ENCODE measurements at regions of chr11 and their contacts with region 1.

Region 1: GRCh38 chr11:33899383-33900037 is 7.6 kb upstream of the LMO2 start:
- DNase-seq: peak; percentile 54 to 88
- ATAC-seq: peak; percentile 96 to 99 (median 96)
- H3K4me3 ChIP-seq: no peak overlapping the region
- H3K27ac ChIP-seq: peak overlapping the region in 5 of 10 donors; percentile 6 to 23 (median 17)
- H3K4me1 ChIP-seq: peaks cover 3 to 45% (median 15%) of the 10 kb centered on the region in 9 donors
- H3K27me3 ChIP-seq: no peaks in the 10 kb centered on the region
- CTCF ChIP-seq: no peak

Region 2: DNA sequence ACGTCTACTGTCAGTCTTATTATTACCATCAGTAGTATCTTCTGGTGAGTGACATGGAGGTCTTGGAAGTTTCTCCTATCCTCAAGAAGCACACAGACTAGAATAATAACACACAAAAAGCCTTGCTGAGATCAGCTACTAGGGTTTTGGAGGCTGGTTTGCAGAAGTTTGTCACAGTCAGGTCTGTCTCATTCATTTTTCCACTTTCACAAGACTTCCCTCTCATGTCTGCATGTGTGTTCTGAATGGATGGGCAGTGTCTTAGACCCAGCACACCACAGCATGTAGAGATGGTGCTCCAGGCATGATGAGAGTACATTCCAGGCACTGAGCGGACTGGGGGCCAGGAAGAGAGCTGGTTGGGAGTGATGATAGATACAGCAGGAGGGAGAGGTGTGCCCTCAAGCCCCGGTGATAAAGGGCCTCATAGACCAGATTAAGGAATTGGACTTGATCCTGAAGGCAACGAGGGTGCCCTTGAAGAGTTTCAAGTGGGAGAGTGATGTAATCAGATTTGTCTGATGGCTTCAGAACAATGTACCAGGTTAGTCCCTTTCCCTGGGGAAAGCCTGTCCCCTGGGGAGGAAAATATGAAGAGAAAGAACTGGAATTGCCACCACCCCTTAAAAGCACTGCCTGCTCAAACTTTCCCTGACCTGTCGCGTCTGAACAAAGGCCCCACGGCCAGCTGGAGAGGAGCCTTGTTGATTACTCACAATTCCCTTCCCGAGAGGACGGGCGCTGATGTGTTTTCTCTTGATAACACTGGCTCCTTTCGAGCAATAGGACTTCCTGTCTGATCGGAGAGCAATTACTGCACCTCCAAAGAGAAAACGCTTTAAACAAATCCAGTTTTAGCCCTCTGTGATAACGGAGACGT is 37.5 kb after region 1 on chr11:
- intact Hi-C with region 1: loop called in 1 of 10 experiments (anchors 1 kb)
- DNase-seq: peak; percentile 53 to 82
- ATAC-seq: peak; percentile 65 to 87 (median 82)
- H3K4me3 ChIP-seq: peak overlapping the region in 1 of 10 donors; percentile 15
- H3K27ac ChIP-seq: peak overlapping the region in 9 of 10 donors; percentile 24 to 66 (median 51)
- H3K4me1 ChIP-seq: peaks cover 11 to 71% (median 57%) of the 10 kb centered on the region in 9 donors
- H3K27me3 ChIP-seq: no peaks in the 10 kb centered on the region
- CTCF ChIP-seq: no peak

Measured in heart right ventricle (tissue), 16 donors.